AG04449 (cell line): ENCODE measurements at regions of chr7 and their contacts with region 1.

Region 1: DNA sequence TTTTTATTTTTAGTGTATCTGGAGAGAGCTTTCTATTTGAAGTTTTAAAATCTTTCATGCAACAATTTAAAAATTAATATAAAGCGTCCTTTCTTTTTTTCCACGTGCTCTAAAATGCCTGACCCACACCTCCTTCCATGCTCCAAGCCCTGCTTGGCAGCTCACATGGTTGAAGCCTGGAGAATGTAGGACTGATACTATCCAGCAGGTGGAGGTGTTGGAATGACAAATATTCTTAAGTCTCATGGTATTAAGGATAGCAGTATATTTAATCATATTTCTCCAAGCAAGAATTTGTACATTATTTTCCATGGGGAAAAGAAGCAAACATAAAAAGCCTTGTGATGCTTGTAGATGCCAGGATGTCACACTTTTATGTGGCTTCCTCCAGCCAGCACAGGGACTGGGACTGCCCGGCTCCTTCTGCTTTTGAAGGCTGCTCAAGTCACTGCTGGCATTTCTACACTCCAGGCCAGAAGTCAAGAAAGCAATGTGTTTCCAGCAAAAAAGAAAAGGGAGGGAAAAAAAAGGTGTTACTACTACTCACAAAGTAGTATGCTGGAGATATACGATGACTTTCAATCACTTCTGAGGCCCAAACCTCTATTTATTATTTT is 49.7 kb downstream of the BZW2 start:
- DNase-seq: no peak
- H3K4me3 ChIP-seq: no peak overlapping the region
- CTCF ChIP-seq: peak; percentile 50

Region 2: DNA sequence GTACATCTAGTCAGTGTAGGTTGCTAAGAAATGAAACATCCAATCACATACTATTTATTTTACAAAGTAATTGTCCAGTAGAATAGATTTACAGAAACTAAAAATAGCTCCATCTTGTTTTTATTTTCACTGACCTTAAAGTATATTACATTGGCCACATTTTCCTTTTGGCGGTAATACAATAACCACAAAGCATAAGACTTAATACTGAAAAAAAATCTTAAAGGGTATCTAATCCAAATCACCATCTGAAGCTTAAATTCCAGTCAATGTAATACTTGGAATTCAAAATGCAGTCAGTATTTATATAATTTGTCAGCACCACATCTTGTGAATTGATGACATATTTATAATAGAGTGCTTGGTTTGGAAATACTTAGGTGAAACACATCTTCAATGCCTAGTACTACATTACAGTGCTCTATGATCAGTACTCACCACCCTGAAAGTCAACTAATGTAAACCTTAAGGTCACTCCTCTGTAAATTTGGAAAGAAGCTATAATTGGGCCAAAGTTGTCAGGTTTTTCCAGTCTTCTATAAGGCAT is 59.1 kb before region 1 on chr7:
- CTCF ChIA-PET with region 1: no interaction called
- POLR2A ChIA-PET with region 1: no interaction called
- DNase-seq: peak; percentile 34
- H3K4me3 ChIP-seq: no peak overlapping the region
- CTCF ChIP-seq: no peak

Region 3: GRCh38 chr7:16652878-16653277 is 42.9 kb before region 1 on chr7:
- CTCF ChIA-PET with region 1: interaction called, 11 read pairs
- POLR2A ChIA-PET with region 1: no interaction called
- DNase-seq: no peak
- H3K4me3 ChIP-seq: no peak overlapping the region
- CTCF ChIP-seq: no peak

Region 4: DNA sequence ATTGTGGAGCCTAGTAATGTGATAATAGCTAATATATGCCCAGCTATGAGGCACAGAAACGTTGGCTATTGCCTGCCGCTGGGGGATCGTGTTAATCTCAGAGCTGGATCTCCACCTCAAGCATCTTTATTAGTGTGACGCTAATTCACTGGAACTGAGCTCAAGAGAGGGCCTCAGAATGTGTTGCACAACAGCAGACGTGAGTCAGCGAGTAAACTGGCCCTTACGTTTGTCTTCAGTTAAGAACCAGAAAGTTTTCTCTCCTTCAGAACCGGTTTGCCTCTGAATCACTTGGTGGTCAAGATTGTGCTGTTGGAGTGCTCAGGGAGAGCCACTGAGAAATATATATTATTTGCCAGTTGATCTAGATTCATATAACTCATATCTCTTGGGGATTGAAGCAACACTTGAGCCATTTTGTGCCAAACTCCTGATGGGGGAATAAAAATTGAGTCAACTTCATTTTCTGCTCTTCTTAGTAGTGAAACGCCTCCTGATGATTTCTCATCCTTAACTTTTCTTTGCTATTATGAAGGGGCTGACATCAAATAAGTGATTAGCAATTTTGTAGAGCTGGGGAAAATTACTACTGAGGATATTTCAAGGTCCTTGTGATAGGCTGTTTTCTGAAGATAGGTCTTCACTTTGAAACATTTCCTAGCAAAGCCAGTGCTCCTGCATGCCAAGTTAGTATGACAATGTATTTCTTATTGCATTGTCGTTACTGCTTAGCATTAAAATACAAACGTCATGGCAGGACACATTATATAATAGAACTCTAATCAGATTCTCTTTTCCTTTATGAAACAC is 27.5 kb before region 1 on chr7:
- CTCF ChIA-PET with region 1: interaction called, 13 read pairs
- POLR2A ChIA-PET with region 1: no interaction called
- DNase-seq: peak; percentile 99
- H3K4me3 ChIP-seq: no peak overlapping the region
- CTCF ChIP-seq: peak; percentile 21

Region 5: GRCh38 chr7:16675277-16675676 is 20.5 kb before region 1 on chr7:
- CTCF ChIA-PET with region 1: interaction called, 13 read pairs
- POLR2A ChIA-PET with region 1: no interaction called
- DNase-seq: no peak
- H3K4me3 ChIP-seq: no peak overlapping the region
- CTCF ChIP-seq: no peak

Region 6: DNA sequence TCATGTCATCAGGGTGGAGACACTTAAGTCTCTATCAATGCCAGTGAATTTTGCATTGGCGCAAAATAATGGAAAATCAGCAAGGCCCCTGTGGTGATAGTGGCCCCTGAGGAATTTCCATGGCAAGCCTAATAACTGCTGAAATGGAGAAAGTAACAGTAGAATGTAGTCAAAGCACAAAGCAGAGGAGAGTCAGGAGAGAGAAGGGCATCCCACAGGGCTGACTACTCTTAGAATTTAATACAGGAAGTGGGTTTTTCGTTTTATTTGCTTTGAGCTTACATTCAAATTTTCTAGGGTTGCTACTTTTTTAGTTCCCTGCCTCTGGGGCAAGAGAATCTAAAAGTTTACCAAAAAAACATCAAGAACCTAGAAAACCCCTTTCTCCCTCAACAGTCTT is 10.8 kb before region 1 on chr7:
- CTCF ChIA-PET with region 1: interaction called, 22 read pairs
- POLR2A ChIA-PET with region 1: no interaction called
- DNase-seq: no peak
- H3K4me3 ChIP-seq: no peak overlapping the region
- CTCF ChIP-seq: no peak

Region 7: DNA sequence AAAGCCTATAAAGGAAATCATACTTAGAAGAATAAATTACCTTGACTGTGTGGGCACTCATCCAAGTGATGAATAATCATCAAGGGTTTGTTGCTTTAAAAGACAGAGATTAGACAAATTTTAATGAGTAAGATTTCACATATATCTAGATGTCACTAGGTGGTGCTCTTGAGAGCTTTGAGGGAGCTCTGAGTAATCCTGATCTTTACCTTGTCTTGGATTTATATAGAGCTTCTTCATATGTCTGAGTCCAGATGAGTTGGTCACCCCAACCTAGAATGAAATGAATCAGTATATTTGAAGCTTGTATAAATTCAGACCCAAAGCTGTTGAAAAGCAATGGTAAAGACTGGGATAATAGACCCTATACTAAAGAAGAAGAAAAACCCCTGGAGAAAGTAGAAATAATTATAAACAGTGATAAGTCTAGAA is 105.4 kb after region 1 on chr7:
- CTCF ChIA-PET with region 1: interaction called, 18 read pairs
- POLR2A ChIA-PET with region 1: no interaction called
- DNase-seq: peak; percentile 28
- H3K4me3 ChIP-seq: no peak overlapping the region
- CTCF ChIP-seq: peak; percentile 42